OCI-LY7 (cell line): ENCODE measurements at regions of chr15 and their contacts with region 1.

Region 1: GRCh38 chr15:38252481-38253412 is at the start of gene SPRED1:
- DNase-seq: peak; percentile 42
- H3K4me3 ChIP-seq: peak within 1 kb of the TSS; percentile 91
- H3K27ac ChIP-seq: peak within 1 kb of the TSS; percentile 76
- H3K4me1 ChIP-seq: peaks cover 28% of the 10 kb centered on the region
- CTCF ChIP-seq: no peak
- total RNA-seq, gene SPRED1: 7.5 and 9.6 TPM in 2 replicates

Region 2: DNA sequence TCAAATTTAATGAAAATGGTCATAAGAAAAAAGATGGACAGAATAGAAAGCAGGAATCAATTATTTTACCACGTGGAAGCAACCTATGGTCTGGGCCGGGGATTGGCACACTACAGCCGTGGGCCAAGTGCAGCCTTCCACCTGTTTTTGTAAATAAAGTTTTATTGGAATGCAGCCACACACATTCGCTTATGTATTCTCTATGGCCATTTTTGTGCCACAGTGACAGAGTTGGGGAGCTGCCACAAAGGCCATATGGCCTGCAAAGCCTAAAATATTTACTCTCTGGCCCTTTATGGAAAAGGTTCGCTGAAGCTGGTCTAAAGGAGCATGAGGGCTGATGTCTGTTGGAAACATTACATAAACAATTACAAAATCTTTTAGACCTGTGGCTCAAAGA is 173.5 kb before region 1 on chr15:
- CTCF ChIA-PET with region 1: interaction called, 3 read pairs
- POLR2A ChIA-PET with region 1: interaction called, 18 read pairs
- intact Hi-C with region 1: loop called (anchors 1 kb)
- DNase-seq: peak; percentile 22
- H3K4me3 ChIP-seq: no peak overlapping the region
- H3K27ac ChIP-seq: peak overlapping the region; percentile 97
- H3K4me1 ChIP-seq: peaks cover 76% of the 10 kb centered on the region
- CTCF ChIP-seq: no peak

Region 3: GRCh38 chr15:38129531-38130204 is 123.1 kb before region 1 on chr15:
- CTCF ChIA-PET with region 1: no interaction called
- POLR2A ChIA-PET with region 1: interaction called, 11 read pairs
- intact Hi-C with region 1: loop called (anchors 5 kb)
- DNase-seq: peak; percentile 66
- H3K4me3 ChIP-seq: peak overlapping the region; percentile 26
- H3K27ac ChIP-seq: peak overlapping the region; percentile 1
- H3K4me1 ChIP-seq: peaks cover 46% of the 10 kb centered on the region
- CTCF ChIP-seq: no peak

Region 4: GRCh38 chr15:38242055-38242454 is 10.7 kb before region 1 on chr15:
- CTCF ChIA-PET with region 1: no interaction called
- POLR2A ChIA-PET with region 1: interaction called, 10 read pairs
- intact Hi-C with region 1: no loop called
- DNase-seq: peak; percentile 55
- H3K4me3 ChIP-seq: peak overlapping the region; percentile 47
- H3K27ac ChIP-seq: peak overlapping the region; percentile 9
- H3K4me1 ChIP-seq: peaks cover 46% of the 10 kb centered on the region
- CTCF ChIP-seq: no peak

Region 5: DNA sequence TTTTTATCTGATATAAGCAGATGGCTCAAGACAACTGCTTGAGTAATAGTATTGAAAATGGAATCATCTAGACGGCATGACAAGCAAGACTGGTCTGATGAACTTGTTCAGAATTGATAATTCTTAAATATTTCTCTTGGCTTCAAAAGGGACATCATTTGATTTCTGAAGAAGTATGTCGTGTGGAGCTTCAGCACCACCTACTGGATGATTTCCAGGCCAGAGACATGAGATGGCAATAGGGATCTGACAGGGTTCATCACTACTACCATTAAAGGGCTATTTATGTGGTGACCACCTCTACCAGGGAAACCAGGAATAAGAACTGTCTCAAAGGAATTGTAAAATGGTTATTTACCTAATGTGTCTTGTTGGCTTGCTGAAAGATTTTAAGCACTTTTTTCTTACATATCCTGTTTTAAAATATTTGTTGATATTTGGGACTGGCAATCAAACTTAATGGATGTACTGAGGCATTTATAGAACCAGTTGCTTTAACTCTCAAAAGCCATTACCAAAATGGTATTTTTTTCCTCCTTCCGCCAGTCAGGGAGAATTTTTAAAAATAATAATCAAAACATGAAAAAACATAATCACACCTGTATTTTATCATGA is 101.7 kb after region 1 on chr15:
- CTCF ChIA-PET with region 1: no interaction called
- POLR2A ChIA-PET with region 1: no interaction called
- intact Hi-C with region 1: loop called (anchors 1 kb)
- DNase-seq: peak; percentile 74
- H3K4me3 ChIP-seq: no peak overlapping the region
- H3K27ac ChIP-seq: no peak overlapping the region
- H3K4me1 ChIP-seq: no peaks in the 10 kb centered on the region
- CTCF ChIP-seq: peak; percentile 95

Region 6: GRCh38 chr15:38631126-38632075 is 378.7 kb after region 1 on chr15:
- CTCF ChIA-PET with region 1: no interaction called
- POLR2A ChIA-PET with region 1: no interaction called
- intact Hi-C with region 1: no loop called
- DNase-seq: no peak
- H3K4me3 ChIP-seq: no peak overlapping the region
- H3K27ac ChIP-seq: no peak overlapping the region
- H3K4me1 ChIP-seq: peaks cover 6% of the 10 kb centered on the region
- CTCF ChIP-seq: no peak